ENCODE measurements at regions of chr7 and their contacts with region 1.

Region 1: GRCh38 chr7:87059525-87060287 is at the start of gene ELAPOR2:
- DNase-seq: peak; percentile 74 to 98 (median 82)

Region 2: GRCh38 chr7:86504229-86504628 is 555.5 kb before region 1 on chr7:
- intact Hi-C with region 1: no loop called
- DNase-seq: no peak

Region 3: DNA sequence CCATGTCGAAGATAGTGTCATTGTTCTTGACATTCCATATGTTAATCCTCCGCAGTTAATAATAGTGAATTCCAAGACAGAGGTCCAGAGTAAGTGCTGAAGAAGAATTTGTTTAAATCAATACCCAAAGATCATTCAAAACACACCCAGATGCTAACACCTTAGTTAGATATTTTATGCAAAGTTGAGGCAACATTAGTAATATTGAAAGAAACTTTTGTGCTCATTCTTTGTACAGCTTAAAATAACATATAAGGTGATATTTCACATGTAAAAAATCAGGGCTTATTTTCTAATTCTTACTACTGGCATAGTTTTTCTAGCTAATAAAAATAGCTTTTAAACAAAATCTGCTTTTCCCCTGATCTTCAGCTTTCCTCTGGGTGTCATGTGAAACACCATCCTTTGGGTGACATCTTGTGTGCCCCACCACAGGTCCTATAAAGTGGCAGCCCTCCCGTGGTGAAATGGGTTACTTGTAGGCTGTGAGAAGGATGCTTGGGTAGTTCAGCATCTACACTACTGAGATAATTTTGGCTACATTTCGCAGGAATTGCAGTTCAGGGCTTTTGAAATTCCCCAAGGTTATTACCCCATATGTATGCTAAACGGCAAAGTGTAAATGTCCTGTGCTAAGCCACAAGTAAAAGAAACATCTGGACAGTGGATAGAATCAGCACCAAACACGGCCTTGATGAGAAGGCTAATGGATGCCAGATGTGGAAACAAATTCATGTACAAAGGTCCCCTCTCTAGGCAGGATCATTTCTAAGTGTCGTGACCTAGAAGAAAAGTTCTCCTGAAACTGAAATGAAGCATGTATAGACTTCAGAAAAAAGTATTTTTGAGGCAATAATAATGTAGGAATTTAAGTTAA is 310.6 kb before region 1 on chr7:
- intact Hi-C with region 1: no loop called
- DNase-seq: no peak

Region 4: GRCh38 chr7:86926732-86927131 is 133.0 kb before region 1 on chr7:
- intact Hi-C with region 1: loop called (anchors 2 kb)
- DNase-seq: peak in 2 of 10 donors; percentile 21 to 37

Region 5: GRCh38 chr7:86939197-86939814 is 120.4 kb before region 1 on chr7:
- intact Hi-C with region 1: loop called (anchors 1 kb)
- DNase-seq: no peak

Region 6: GRCh38 chr7:87003872-87004798 is 55.6 kb before region 1 on chr7:
- intact Hi-C with region 1: loop called (anchors 10 kb)
- DNase-seq: peak in 5 of 10 donors; percentile 8 to 51 (median 21)

Region 7: GRCh38 chr7:87231256-87231655 is 171.6 kb after region 1 on chr7:
- intact Hi-C with region 1: loop called (anchors 10 kb)
- DNase-seq: peak; percentile 21 to 89 (median 45)